Mammary epithelial cell (primary cell): ENCODE measurements at regions of chr1 and their contacts with region 1.

Region 1: DNA sequence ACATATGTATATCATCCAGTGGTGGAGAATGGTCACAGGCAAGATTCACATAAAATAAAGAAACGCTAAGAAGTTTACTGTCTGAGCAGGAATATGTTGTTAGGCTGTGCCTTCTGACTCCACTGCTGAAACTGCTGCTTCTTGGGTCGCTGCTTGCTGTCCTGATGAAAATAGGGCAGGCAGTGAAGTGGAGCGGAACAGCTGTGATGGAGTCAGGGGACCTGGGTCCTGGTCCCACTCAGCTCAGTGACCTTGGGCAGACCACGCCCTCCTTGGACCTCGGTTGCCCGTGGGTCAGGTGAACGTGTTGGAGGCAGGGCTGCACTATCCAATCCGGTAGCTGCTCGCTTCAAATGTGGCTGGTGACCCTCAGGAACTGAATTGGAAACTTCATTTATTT is 33.4 kb upstream of the IFFO2 start:
- DNase-seq: no peak
- H3K4me3 ChIP-seq: no peak overlapping the region
- H3K27ac ChIP-seq: no peak overlapping the region
- H3K4me1 ChIP-seq: no peaks in the 10 kb centered on the region
- H3K27me3 ChIP-seq: no peaks in the 10 kb centered on the region
- CTCF ChIP-seq: no peak

Region 2: DNA sequence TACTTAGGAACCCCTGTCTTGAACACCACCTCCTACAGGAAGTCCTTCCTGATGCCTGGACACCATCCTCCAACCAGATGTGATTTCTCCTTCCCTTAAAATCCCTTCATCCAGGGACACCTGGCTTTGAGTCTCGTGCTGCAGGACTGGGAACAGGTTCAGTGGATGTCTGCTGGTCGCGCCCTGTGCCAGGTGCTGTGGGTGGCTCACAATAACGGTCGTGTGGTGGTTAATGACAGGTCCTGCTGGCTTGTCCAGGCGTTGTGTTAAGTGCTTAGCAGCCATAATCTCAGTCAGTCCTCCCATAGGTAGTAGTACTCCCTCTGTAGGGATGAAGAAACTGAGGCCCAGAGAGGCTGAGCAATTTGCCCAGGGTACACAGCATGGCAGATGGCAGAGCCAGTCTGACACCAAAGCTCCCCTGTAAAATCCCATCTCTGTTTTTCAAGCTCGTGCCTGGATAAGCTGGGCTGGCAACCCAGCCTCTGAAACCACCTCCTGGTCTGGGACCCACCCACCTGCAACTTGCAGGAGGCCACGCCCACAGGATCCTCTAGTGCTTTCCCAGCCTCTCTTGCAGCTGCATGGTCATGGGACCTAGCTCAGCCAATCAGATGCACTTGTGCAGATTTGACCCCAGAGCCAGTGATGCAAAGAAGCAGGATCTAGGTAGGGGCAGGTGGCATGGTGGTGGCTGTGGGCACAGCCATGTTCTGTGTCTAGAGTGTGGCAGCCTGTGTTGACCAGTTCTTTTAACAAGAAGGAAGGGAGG is 72.5 kb after region 1 on chr1:
- CTCF ChIA-PET with region 1: no interaction called
- dilution Hi-C with region 1: loop called (anchors 5 kb)
- in situ Hi-C with region 1: no loop called
- intact Hi-C with region 1: no loop called
- DNase-seq: no peak
- H3K4me3 ChIP-seq: no peak overlapping the region
- H3K27ac ChIP-seq: no peak overlapping the region
- H3K4me1 ChIP-seq: peaks cover 14% of the 10 kb centered on the region
- H3K27me3 ChIP-seq: no peaks in the 10 kb centered on the region
- CTCF ChIP-seq: no peak